Ascending aorta (tissue), 2 donors: ENCODE measurements at regions of chr5 and their contacts with region 1.

Region 1: GRCh38 chr5:159915904-159916840 is at the start of gene ADRA1B:
- DNase-seq: peak in 1 of 2 donors; percentile 89
- H3K4me3 ChIP-seq: peak within 1 kb of the TSS; percentile 59 to 84
- H3K27ac ChIP-seq: peak within 1 kb of the TSS; percentile 93 to 94
- H3K4me1 ChIP-seq: peaks cover 27 to 41% of the 10 kb centered on the region in 2 donors
- H3K27me3 ChIP-seq: no peaks in the 10 kb centered on the region
- CTCF ChIP-seq: peak; percentile 61 to 89 (median 65)
- total RNA-seq, gene ADRA1B: 20.6 TPM

Region 2: DNA sequence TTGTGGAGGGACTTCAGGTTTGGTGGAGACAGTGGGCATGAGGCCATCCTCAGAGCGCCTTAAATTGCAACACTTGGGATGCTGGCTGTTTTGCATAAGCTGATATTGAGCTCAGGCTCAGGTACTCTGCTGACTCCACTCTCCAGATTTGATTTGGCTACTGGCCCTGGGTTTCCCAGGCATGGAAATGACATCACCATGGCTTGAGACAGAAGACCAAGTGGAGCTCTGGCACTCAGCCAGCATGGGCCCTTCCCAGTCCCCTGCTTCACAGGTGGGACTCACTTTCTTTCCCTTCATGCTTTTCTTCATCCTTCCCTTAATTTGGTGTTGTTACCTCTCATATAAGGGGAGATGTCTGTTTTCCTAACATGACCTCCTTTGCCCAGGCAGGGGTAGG is 513.9 kb before region 1 on chr5:
- intact Hi-C with region 1: no loop called
- DNase-seq: no peak
- H3K4me3 ChIP-seq: no peak overlapping the region
- H3K27ac ChIP-seq: no peak overlapping the region
- H3K4me1 ChIP-seq: no peaks in the 10 kb centered on the region
- H3K27me3 ChIP-seq: no peaks in the 10 kb centered on the region
- CTCF ChIP-seq: no peak

Region 3: GRCh38 chr5:159515909-159516415 is 400.2 kb before region 1 on chr5:
- intact Hi-C with region 1: loop called (anchors 1 kb)
- DNase-seq: peak; percentile 23 to 80
- H3K4me3 ChIP-seq: no peak overlapping the region
- H3K27ac ChIP-seq: peak overlapping the region; percentile 84 to 87
- H3K4me1 ChIP-seq: peaks cover 3 to 24% of the 10 kb centered on the region in 2 donors
- H3K27me3 ChIP-seq: no peaks in the 10 kb centered on the region
- CTCF ChIP-seq: peak; percentile 71 to 79 (median 73)

Region 4: DNA sequence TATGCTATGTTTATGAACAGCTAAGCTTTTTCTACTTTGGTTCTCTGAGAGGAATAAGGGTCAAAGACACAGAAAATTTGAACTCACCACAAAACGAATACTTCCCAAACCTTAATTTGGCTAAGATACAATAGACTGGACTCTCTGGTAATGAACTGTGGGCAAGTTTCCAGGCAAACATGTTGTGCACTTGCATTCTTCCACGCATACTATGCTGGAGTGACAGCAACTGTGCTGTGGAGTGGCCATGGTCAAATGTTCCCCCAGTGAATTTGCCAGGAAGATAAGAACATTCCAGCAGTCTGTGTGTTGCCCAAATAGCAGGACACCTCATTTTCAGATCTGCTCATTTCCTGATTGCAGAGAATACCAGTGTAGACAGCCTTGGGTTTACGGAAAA is 310.6 kb before region 1 on chr5:
- intact Hi-C with region 1: loop called (anchors 5 kb)
- DNase-seq: peak in 1 of 2 donors; percentile 64
- H3K4me3 ChIP-seq: no peak overlapping the region
- H3K27ac ChIP-seq: peak overlapping the region; percentile 1 to 3
- H3K4me1 ChIP-seq: peaks cover 0 to 14% of the 10 kb centered on the region in 2 donors
- H3K27me3 ChIP-seq: no peaks in the 10 kb centered on the region
- CTCF ChIP-seq: no peak

Region 5: DNA sequence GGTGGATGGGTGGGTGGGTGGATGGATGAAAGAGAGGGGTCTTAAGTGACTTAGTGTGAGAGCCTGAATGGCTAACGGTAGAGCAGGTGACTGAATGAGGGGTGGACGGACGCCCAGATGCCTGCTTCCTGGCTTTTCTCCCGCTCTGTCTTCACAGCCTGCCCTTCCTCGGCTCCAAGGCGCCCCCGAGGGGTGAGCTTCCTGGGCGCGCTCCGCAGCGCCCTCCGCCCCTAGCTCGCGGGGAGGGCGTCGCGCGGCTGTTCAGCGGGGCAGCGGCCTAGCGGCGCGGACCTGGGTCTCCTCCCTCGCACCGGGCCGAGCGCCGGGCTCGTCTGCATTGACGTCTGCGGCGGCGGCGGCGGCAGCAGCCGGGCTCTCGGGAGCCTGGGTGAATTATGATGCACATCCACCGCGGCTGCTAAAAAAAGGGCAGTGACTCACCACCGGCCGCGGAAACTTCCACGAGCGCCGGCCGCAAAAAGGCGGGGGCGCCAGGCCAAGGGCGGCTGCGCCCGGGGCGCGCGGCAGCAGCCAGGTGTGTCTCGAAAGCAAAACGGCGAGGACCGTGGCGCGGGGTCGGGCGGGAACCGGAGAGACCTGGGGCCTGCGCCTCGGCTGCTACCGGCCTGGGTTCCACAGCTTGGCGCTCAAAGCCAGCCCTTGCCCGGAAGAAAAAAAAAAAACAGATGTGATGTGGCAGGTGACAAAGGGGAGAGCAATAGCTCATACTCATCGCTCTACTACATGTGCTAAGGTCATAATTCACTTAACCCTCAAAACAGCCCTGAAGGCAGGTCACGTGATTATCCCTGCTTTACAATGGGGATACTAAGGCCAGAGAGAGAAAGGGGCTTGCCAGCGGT is 142.9 kb before region 1 on chr5:
- intact Hi-C with region 1: loop called (anchors 2 kb)
- DNase-seq: peak; percentile 69 to 95
- H3K4me3 ChIP-seq: peak overlapping the region; percentile 36 to 55
- H3K27ac ChIP-seq: peak overlapping the region; percentile 94 to 95
- H3K4me1 ChIP-seq: peaks cover 2 to 31% of the 10 kb centered on the region in 2 donors
- H3K27me3 ChIP-seq: no peaks in the 10 kb centered on the region
- CTCF ChIP-seq: peak in 2 of 3 experiments; percentile 42 to 45

Region 6: DNA sequence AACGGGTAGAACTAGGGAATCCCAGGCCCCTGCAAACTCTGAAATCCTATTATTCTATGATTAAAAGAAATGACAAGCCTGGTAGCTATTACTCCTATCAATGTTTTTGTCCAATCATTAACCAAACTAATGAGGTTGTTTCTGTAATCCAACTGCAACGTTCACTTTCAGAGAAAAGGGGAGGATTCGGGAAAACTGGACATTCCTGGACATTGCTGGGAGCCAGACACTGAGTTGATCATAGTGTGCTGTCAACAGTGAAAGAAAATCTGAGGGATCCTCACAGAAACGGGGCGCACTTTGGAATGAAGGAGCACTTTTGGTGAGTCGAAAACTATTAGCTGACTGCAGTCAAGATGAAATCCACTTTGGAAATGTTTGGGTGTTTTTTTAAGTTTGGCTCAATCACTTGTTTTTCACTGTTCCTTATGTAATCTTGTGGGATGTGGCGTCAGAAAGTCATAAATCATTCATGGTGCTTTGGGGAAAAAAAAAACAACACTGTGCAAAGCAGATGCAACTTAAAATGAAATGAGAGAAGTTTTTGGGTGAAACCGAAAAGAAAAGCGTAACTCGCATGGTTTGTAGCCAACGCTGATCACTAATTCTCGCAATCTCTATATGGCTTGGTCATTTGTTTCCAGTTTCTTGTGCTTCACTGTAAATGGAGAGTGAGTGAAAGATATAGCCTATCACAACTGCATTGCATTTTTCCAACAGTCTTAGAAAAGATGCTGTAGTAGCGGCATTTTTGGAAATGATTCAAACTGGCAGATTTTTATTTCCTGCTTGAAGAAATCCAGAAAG is 51.1 kb before region 1 on chr5:
- intact Hi-C with region 1: loop called (anchors 10 kb)
- DNase-seq: no peak
- H3K4me3 ChIP-seq: peak overlapping the region in 1 of 2 donors; percentile 54
- H3K27ac ChIP-seq: no peak overlapping the region
- H3K4me1 ChIP-seq: peaks cover 0 to 11% of the 10 kb centered on the region in 2 donors
- H3K27me3 ChIP-seq: no peaks in the 10 kb centered on the region
- CTCF ChIP-seq: no peak

Region 7: GRCh38 chr5:159987031-159987674 is 71.0 kb after region 1 on chr5:
- intact Hi-C with region 1: loop called (anchors 1 kb)
- DNase-seq: peak in 1 of 2 donors; percentile 86
- H3K4me3 ChIP-seq: peak overlapping the region; percentile 54 to 74
- H3K27ac ChIP-seq: no peak overlapping the region
- H3K4me1 ChIP-seq: peaks cover 0 to 4% of the 10 kb centered on the region in 2 donors
- H3K27me3 ChIP-seq: no peaks in the 10 kb centered on the region
- CTCF ChIP-seq: peak; percentile 73 to 92 (median 75)

Region 8: GRCh38 chr5:160097991-160098390 is 181.8 kb after region 1 on chr5:
- intact Hi-C with region 1: no loop called
- DNase-seq: no peak
- H3K4me3 ChIP-seq: no peak overlapping the region
- H3K27ac ChIP-seq: no peak overlapping the region
- H3K4me1 ChIP-seq: no peaks in the 10 kb centered on the region
- H3K27me3 ChIP-seq: no peaks in the 10 kb centered on the region
- CTCF ChIP-seq: no peak

Region 9: GRCh38 chr5:160188142-160189015 is 272.2 kb after region 1 on chr5:
- intact Hi-C with region 1: no loop called
- DNase-seq: peak in 1 of 2 donors; percentile 67
- H3K4me3 ChIP-seq: peak overlapping the region; percentile 51 to 69
- H3K27ac ChIP-seq: peak overlapping the region; percentile 29 to 60
- H3K4me1 ChIP-seq: peaks cover 0 to 6% of the 10 kb centered on the region in 2 donors
- H3K27me3 ChIP-seq: no peaks in the 10 kb centered on the region
- CTCF ChIP-seq: peak in 1 of 3 experiments; percentile 31